ENCODE measurements at regions of chr1 and their contacts with region 1.

Region 1: GRCh38 chr1:117895482-117896114 is 33.8 kb downstream of the GDAP2 start:
- DNase-seq: peak in 7 of 10 donors; percentile 32 to 79 (median 43)
- H3K4me3 ChIP-seq: no peak overlapping the region
- H3K27ac ChIP-seq: no peak overlapping the region
- H3K27me3 ChIP-seq: no peaks in the 10 kb centered on the region
- CTCF ChIP-seq: peak; percentile 59 to 88 (median 76)

Region 2: DNA sequence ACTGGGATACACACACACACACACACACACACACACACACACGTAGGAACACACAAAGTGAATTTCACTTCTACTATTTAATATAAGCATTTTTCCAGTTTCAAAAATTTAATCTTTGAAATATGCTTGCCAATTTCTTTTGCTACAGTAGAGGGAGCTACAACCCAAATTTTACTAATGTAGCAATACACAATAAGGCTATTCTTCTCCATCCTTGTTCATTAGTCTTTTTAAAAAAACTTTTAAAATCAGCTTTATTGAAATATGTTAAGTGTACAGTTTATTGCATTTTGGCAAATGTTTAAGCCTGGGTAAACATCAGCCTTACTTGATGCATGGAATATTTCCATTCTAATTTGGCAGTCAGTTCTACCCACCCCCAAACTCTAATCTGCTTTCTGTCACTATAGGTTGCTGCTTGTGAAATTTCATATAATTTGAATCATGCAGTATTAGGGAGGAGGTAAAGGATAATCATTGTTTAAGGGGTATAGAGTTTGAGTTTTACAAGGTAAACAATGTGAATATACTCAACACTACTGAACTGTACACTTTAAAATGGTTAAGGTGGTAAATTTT is 382.8 kb before region 1 on chr1:
- intact Hi-C with region 1: loop called in 1 of 2 experiments (anchors 5 kb)
- DNase-seq: no peak
- H3K4me3 ChIP-seq: no peak overlapping the region
- H3K27ac ChIP-seq: no peak overlapping the region
- H3K27me3 ChIP-seq: no peaks in the 10 kb centered on the region
- CTCF ChIP-seq: peak; percentile 24 to 79 (median 63)

Region 3: DNA sequence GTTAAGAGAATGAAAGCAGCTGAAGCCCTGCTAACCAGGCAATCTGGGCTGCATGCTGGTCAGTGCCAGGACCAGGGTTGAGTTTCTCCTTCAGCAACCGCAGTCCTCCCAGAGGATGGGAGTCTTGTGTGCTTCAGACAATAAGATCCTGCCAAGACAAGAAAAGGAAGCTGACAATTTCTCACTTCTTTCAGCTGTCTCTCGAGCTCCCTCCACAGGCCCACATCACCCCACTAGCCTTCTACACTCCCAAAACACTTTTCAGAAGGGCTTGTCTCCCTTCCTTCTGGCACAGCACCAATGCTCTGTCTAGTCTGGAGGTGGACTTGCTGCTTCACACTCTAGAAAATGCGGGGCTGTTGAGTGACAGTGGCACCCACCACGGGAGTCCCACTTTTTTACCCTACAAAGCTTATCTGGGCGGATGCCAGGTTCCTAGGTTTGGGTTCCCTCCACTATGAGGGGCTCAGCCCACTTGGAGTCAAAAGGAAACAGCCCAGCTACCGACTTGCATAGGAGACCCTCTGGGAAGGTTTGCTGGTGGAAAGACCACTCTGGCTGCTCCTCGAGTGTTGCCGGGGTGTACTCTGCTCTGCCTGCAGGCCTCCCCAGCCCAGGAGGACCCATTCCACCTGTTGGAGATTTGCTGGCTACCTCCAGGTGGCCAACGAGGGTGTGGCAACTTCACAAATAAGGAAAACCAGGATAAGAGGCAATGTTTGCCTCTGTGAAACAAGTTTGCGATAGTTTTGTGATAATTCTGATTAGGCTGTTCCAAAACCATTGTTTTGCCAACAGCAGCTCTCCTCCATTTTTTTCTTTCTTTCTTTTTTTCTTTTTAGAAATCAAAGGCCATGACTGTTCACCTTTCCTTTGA is 220.8 kb before region 1 on chr1:
- intact Hi-C with region 1: no loop called
- DNase-seq: no peak
- H3K4me3 ChIP-seq: no peak overlapping the region
- H3K27ac ChIP-seq: no peak overlapping the region
- H3K27me3 ChIP-seq: no peaks in the 10 kb centered on the region
- CTCF ChIP-seq: peak in 25 of 56 donors; percentile 9 to 46 (median 16)

Region 4: DNA sequence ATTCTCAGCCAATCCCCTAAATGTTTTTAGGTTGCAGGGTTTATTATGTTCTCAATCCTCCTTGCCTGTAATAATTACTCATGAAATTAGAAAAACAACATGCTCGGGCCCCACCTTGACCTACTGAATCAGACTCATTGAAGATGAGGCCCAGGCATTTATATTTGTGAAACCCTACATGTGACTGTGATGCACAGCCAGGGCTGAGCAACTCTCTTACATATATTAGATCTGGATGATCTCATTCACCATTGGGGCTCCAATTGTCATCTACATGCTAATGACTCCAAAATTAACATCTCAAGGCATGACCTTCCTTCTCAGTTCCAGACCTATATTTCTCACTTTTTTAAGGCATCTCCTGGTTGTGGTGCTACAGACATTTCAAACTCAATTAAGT is 137.3 kb after region 1 on chr1:
- intact Hi-C with region 1: no loop called
- DNase-seq: no peak
- H3K4me3 ChIP-seq: no peak overlapping the region
- H3K27ac ChIP-seq: no peak overlapping the region
- H3K27me3 ChIP-seq: peaks cover 0 to 5% (median 0%) of the 10 kb centered on the region in 45 donors
- CTCF ChIP-seq: no peak

Measured in dorsolateral prefrontal cortex (tissue), 120 donors.